K562 (cell line): ENCODE measurements at regions of chr3 and their contacts with region 1.

Region 1: GRCh38 chr3:169764452-169765274 is at the start of gene TERC:
- DNase-seq: peak; percentile 74 to 93 (median 82)
- ATAC-seq: peak; percentile 96
- H3K4me3 ChIP-seq: peak within 1 kb of the TSS; percentile 71
- H3K27ac ChIP-seq: peak within 1 kb of the TSS; percentile 95
- H3K4me1 ChIP-seq: peaks cover 6 to 20% of the 10 kb centered on the region in 2 experiments
- H3K27me3 ChIP-seq: no peaks in the 10 kb centered on the region
- CTCF ChIP-seq: no peak
- EP300 ChIP-seq: no peak
- POLR2A ChIP-seq: peak; percentile 96
- RAD21 ChIP-seq: peak in 1 of 2 experiments; percentile 14; a peak in 1 of 4 replicates
- polyA plus RNA-seq, gene TERC: not detected

Region 2: DNA sequence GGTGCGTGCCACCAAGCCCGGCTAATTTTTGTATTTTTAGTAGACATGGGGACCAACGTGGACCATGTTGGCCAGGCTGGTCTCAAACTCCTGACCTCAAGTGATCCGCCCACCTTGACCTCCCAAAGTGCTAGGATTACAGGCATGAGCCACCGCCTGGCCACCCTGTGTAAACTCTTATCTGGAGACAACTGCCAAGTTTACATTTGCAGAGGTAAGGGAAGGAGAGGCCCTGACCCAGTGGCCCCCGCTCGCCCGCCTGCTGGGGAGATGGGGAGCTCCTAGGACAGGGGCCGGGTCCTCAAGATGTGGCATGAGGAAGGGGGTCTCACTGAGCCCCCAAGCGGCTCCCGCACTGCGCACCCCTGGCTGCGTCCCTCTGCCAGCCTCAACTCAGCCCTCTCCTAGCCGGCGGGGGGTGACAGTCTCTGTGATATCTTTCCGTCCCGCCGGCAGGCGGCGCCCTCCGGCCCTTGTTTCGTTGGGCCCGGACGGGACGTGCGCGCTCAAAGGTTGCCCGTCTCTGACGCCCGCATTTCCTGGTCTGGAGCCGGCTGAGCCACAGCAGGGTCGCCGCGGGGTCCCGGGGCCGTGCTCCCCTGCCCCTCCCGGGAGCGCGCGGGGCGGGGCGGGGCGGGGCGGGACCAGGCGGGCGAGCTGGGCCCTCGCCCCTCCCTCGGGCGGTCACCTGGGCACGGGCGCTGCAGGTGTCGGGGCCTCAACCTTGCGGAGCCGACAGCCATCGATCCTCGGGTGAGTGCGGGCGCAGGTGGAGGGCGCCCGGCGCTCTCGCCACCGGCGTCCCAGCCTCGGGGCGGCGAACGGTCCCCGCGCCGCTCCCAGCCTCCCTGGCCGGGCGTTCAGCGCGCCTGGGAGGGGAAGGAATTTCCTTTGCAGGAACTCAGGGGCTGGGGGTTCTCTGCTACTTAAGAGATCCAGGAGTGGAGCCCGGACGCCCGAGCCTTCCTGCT is 273.1 kb after region 1 on chr3 and contains the start of gene GPR160:
- CTCF ChIA-PET with region 1: no interaction called
- POLR2A ChIA-PET with region 1: no interaction called
- in situ Hi-C with region 1: no loop called
- intact Hi-C with region 1: loop called (anchors 5 kb)
- DNase-seq: peak; percentile 79 to 87 (median 82)
- ATAC-seq: peak; percentile 97
- H3K4me3 ChIP-seq: peak within 1 kb of the TSS; percentile 72
- H3K27ac ChIP-seq: peak within 1 kb of the TSS; percentile 46; the same call in 1 of the 3 replicates
- H3K4me1 ChIP-seq: peaks cover 0 to 16% of the 10 kb centered on the region in 2 experiments; a peak in 2 of 5 replicates
- H3K27me3 ChIP-seq: no peaks in the 10 kb centered on the region
- CTCF ChIP-seq: peak; percentile 82 to 86 (median 82)
- EP300 ChIP-seq: no peak
- POLR2A ChIP-seq: no peak
- RAD21 ChIP-seq: peak; percentile 62 to 78
- polyA plus RNA-seq, gene GPR160: 1.3 to 1.5 TPM

Region 3: DNA sequence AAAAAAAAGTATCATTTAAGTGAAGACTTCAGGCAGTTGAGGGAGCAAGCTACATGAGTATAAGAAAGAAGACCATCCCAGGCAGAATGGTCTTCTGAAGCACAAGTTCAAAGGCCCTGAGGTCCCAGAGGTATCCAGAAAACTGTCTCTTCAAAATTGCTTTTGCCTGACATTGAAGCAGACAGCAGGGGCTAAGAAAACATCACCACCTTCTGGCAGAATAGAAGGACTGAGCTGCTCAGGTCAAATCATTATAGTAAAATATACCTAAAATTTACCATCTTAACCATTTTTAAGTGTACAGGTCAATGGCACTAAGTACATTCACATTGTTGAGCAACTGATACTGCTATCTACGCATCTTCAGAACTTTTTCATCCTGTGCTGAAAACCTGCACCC is 289.5 kb after region 1 on chr3:
- CTCF ChIA-PET with region 1: no interaction called
- POLR2A ChIA-PET with region 1: interaction called, 3 read pairs
- in situ Hi-C with region 1: no loop called
- intact Hi-C with region 1: loop called (anchors 1 kb)
- DNase-seq: peak in 2 of 4 experiments; percentile 32 to 37
- ATAC-seq: peak; percentile 83
- H3K4me3 ChIP-seq: no peak overlapping the region
- H3K27ac ChIP-seq: no peak overlapping the region
- H3K4me1 ChIP-seq: no peaks in the 10 kb centered on the region; a peak in 1 of 5 replicates
- H3K27me3 ChIP-seq: no peaks in the 10 kb centered on the region
- CTCF ChIP-seq: peak; percentile 33 to 56 (median 51); a peak in 3 of 6 replicates
- EP300 ChIP-seq: no peak
- POLR2A ChIP-seq: no peak
- RAD21 ChIP-seq: peak in 1 of 2 experiments; percentile 71; a peak in 3 of 4 replicates